ENCODE measurements at regions of chr18 and their contacts with region 1.

Region 1: GRCh38 chr18:63578357-63578958 is 8.7 kb upstream of the SERPINB13 start:
- DNase-seq: no peak
- H3K4me3 Mint-ChIP-seq: no peak overlapping the region
- H3K27ac Mint-ChIP-seq: no peak overlapping the region
- H3K4me1 Mint-ChIP-seq: no peaks in the 10 kb centered on the region
- H3K27me3 Mint-ChIP-seq: peaks cover 7% of the 10 kb centered on the region

Region 2: GRCh38 chr18:63511286-63511685 is 67.2 kb before region 1 on chr18:
- intact Hi-C with region 1: loop called (anchors 2 kb)
- DNase-seq: no peak
- H3K4me3 Mint-ChIP-seq: no peak overlapping the region
- H3K27ac Mint-ChIP-seq: no peak overlapping the region
- H3K4me1 Mint-ChIP-seq: peaks cover 2% of the 10 kb centered on the region
- H3K27me3 Mint-ChIP-seq: peaks cover 7% of the 10 kb centered on the region

Region 3: GRCh38 chr18:63518178-63519012 is 60.1 kb before region 1 on chr18:
- intact Hi-C with region 1: loop called (anchors 1 kb)
- DNase-seq: peak; percentile 30
- H3K4me3 Mint-ChIP-seq: no peak overlapping the region
- H3K27ac Mint-ChIP-seq: no peak overlapping the region
- H3K4me1 Mint-ChIP-seq: no peaks in the 10 kb centered on the region
- H3K27me3 Mint-ChIP-seq: peaks cover 24% of the 10 kb centered on the region

Region 4: GRCh38 chr18:63848159-63848558 is 269.7 kb after region 1 on chr18:
- intact Hi-C with region 1: loop called (anchors 5 kb)
- DNase-seq: no peak
- H3K4me3 Mint-ChIP-seq: no peak overlapping the region
- H3K27ac Mint-ChIP-seq: no peak overlapping the region
- H3K4me1 Mint-ChIP-seq: no peaks in the 10 kb centered on the region
- H3K27me3 Mint-ChIP-seq: peaks cover 13% of the 10 kb centered on the region